Colonic mucosa (tissue), 4 donors: ENCODE measurements at regions of chr5 and their contacts with region 1.

Region 1: DNA sequence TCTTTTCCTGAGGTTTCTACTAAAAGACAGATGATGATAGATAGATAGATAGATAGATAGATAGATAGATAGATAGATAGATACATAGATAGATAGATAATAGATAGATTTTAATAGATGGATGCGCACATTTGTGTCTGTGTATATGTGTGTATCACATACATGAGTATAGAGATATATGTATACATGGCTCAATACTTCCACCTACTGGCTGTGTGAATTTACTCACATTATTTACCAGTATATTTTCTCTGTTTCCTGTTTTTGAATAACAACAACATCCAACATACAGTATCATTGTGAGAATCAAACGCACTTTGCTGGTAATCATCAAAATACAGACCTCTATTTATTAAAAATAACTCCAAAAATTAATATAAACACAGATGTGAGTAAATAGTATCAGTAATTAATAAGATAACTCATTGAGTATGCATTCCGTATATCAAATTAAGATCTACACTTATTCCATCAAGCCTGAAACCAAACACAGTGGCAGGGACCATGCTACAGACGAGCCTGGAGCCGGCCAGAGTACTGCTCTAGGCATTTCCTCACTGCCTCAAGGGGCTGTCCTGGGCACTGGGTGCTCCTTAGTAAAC is 338.0 kb downstream of the SEMA5A start:
- DNase-seq: no peak
- H3K4me3 ChIP-seq: no peak overlapping the region
- H3K27ac ChIP-seq: no peak overlapping the region
- H3K4me1 ChIP-seq: no peaks in the 10 kb centered on the region
- H3K27me3 ChIP-seq: no peaks in the 10 kb centered on the region
- CTCF ChIP-seq: peak; percentile 35

Region 2: GRCh38 chr5:8756498-8757084 is 451.3 kb before region 1 on chr5:
- intact Hi-C with region 1: loop called (anchors 10 kb)
- DNase-seq: no peak
- H3K4me3 ChIP-seq: no peak overlapping the region
- H3K27ac ChIP-seq: no peak overlapping the region
- H3K4me1 ChIP-seq: no peaks in the 10 kb centered on the region
- H3K27me3 ChIP-seq: no peaks in the 10 kb centered on the region
- CTCF ChIP-seq: peak; percentile 40

Region 3: DNA sequence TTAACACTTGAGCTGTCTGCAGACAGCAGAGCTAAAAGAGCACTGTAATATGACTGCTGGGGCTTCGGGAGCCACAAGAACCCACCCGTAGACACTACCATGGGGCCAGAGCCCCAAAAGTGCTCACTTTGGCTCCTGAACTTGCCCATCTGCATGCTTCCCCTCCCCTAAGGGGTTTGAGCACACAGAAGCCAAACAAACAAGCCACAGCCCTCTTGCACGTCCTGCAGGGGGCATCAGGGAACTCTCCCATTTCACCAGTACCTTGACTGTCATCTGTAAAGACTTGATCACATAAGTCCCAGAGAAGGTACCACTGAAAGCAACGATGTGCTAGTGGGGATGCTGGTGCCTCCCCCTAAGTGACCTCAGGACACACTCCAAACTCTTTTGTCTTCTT is 343.9 kb before region 1 on chr5:
- intact Hi-C with region 1: loop called (anchors 10 kb)
- DNase-seq: no peak
- H3K4me3 ChIP-seq: no peak overlapping the region
- H3K27ac ChIP-seq: no peak overlapping the region
- H3K4me1 ChIP-seq: no peaks in the 10 kb centered on the region
- H3K27me3 ChIP-seq: no peaks in the 10 kb centered on the region
- CTCF ChIP-seq: no peak

Region 4: GRCh38 chr5:9947225-9947714 is 739.4 kb after region 1 on chr5:
- intact Hi-C with region 1: no loop called
- DNase-seq: no peak
- H3K4me3 ChIP-seq: no peak overlapping the region
- H3K27ac ChIP-seq: no peak overlapping the region
- H3K4me1 ChIP-seq: no peaks in the 10 kb centered on the region
- H3K27me3 ChIP-seq: no peaks in the 10 kb centered on the region
- CTCF ChIP-seq: no peak